CD4-positive, alpha-beta T cell (primary cell): ENCODE measurements at regions of chr12 and their contacts with region 1.

Region 1: DNA sequence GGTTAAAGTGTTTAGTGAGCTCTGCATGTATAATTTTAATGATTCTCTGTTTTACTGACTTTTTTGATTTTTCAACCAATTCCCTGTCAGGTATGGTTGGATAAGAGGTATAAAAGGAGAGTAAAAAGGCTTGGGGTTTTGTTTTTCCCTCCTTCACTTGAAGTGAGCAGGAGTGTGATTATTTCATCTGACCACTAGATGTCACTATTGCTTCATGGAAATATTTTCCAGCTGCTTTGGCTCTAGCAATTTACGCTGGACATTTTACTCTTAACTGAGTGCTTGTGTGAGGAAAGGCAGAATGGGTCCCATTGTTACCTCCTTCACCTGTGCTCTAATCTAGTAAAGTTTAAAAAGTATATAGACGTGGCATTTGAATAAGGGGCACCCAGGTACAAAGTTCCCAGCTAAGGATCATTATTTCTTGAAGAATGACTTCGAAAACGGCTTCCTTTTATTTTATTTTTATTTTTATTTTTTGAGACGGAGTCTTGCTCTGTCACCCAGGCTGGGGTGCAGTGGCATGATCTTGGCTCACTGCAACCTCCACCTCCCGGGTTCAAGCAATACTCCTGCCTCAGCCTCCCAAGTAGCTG is 66.5 kb downstream of the TBC1D30 start:
- DNase-seq: peak in 3 of 14 experiments; percentile 58 to 74 (median 68)
- ATAC-seq: peak; percentile 44
- H3K4me3 ChIP-seq: no peak overlapping the region
- H3K4me3 Mint-ChIP-seq: no peak overlapping the region
- H3K27ac ChIP-seq: no peak overlapping the region
- H3K27ac Mint-ChIP-seq: no peak overlapping the region
- H3K4me1 ChIP-seq: no peaks in the 10 kb centered on the region
- H3K4me1 Mint-ChIP-seq: no peaks in the 10 kb centered on the region
- H3K27me3 ChIP-seq: peaks cover 0 to 4% of the 10 kb centered on the region in 2 experiments
- H3K27me3 Mint-ChIP-seq: peaks cover 22% of the 10 kb centered on the region
- CTCF ChIP-seq: peak; percentile 90

Region 2: GRCh38 chr12:65269603-65270002 is 378.6 kb after region 1 on chr12:
- CTCF ChIA-PET with region 1: no interaction called
- POLR2A ChIA-PET with region 1: no interaction called
- intact Hi-C with region 1: no loop called
- DNase-seq: no peak
- ATAC-seq: no peak
- H3K4me3 ChIP-seq: no peak overlapping the region
- H3K4me3 Mint-ChIP-seq: no peak overlapping the region
- H3K27ac ChIP-seq: no peak overlapping the region
- H3K27ac Mint-ChIP-seq: no peak overlapping the region
- H3K4me1 ChIP-seq: no peaks in the 10 kb centered on the region
- H3K4me1 Mint-ChIP-seq: no peaks in the 10 kb centered on the region
- H3K27me3 ChIP-seq: peaks cover 0 to 14% of the 10 kb centered on the region in 2 experiments
- H3K27me3 Mint-ChIP-seq: peaks cover 34% of the 10 kb centered on the region
- CTCF ChIP-seq: no peak

Region 3: DNA sequence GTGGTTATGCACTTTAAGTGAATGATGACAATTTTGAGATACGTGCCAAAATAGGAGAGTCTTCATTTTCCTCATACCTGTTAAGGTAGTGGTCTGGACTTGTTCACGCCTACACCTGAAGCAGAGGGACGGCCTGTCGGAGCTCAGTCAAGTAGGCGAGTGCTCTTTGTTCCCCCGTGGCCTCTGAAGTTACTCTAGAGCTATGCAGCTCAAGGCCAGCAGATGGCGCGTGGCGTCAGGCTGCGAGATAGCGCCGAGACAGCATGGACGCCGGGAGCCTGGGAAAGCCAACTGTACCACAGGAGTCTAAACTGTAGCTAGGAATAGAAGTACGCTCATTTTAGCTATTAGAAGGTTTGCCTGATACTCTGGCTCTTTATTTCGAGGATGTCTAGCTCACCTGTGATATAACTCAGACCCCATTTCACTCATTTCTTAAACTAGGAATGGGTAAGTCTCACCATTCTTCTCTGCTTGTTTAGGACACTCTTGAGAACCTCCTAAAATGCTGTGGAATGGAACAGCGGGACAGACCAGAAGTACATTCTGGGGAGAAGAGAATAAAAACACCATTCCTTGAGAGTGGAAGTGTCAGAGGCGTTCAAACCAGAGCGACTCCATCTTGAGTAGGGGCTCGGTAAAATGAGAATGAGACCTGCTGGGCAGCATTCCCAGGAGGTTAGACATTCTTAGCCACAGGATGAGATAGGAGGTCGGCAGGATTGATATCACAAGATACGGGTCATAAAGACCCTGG is 665.9 kb after region 1 on chr12:
- CTCF ChIA-PET with region 1: no interaction called
- POLR2A ChIA-PET with region 1: no interaction called
- intact Hi-C with region 1: loop called in 1 of 2 experiments (anchors 5 kb)
- DNase-seq: peak; percentile 22 to 69 (median 40)
- ATAC-seq: peak; percentile 82
- H3K4me3 ChIP-seq: no peak overlapping the region
- H3K4me3 Mint-ChIP-seq: no peak overlapping the region
- H3K27ac ChIP-seq: no peak overlapping the region
- H3K27ac Mint-ChIP-seq: no peak overlapping the region
- H3K4me1 ChIP-seq: peaks cover 5% of the 10 kb centered on the region
- H3K4me1 Mint-ChIP-seq: no peaks in the 10 kb centered on the region
- H3K27me3 ChIP-seq: peaks cover 0 to 4% of the 10 kb centered on the region in 2 experiments
- H3K27me3 Mint-ChIP-seq: peaks cover 19% of the 10 kb centered on the region
- CTCF ChIP-seq: peak; percentile 70

Region 4: GRCh38 chr12:66087365-66087943 is 1196.5 kb after region 1 on chr12:
- CTCF ChIA-PET with region 1: no interaction called
- POLR2A ChIA-PET with region 1: no interaction called
- intact Hi-C with region 1: loop called (anchors 1 to 2 kb)
- DNase-seq: peak in 13 of 14 experiments; percentile 12 to 65 (median 34)
- ATAC-seq: peak; percentile 61
- H3K4me3 ChIP-seq: no peak overlapping the region
- H3K4me3 Mint-ChIP-seq: no peak overlapping the region
- H3K27ac ChIP-seq: no peak overlapping the region
- H3K27ac Mint-ChIP-seq: no peak overlapping the region
- H3K4me1 ChIP-seq: no peaks in the 10 kb centered on the region
- H3K4me1 Mint-ChIP-seq: no peaks in the 10 kb centered on the region
- H3K27me3 ChIP-seq: peaks cover 2 to 9% of the 10 kb centered on the region in 2 experiments
- H3K27me3 Mint-ChIP-seq: peaks cover 36% of the 10 kb centered on the region
- CTCF ChIP-seq: peak; percentile 71

Region 5: DNA sequence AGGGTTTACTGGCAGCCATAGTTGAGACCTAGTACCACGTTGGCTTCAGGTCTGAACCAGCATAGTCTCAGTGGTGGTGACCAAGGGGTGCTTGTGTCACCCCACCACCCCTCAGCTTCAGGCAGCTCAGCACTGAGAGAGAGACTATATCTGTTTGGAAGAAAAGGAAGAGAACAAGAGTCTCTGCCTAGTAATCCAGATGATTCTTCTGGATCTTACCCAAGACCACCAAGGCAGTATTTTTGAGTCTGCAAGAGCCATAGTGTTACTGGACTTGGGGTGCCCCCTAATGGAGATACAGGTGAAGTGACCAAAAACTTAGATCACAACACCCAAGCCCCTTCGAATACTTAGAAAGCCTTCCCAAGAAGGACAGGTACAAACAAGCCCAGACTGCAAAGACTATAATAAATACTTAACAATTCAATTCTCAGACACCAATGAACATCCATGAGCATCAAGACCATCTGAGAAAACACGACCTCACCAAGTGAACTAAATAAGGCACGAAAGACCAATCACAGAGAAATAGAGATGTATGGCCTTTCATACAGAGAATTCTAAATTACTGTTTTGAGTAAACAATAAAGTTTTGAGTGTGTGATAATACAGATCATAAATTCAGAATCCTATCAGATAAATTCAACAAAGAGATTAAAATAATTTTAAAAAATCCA is 1518.4 kb after region 1 on chr12:
- CTCF ChIA-PET with region 1: no interaction called
- POLR2A ChIA-PET with region 1: no interaction called
- intact Hi-C with region 1: loop called in 1 of 2 experiments (anchors 5 kb)
- DNase-seq: peak in 12 of 14 experiments; percentile 4 to 73 (median 26)
- ATAC-seq: no peak
- H3K4me3 ChIP-seq: no peak overlapping the region
- H3K4me3 Mint-ChIP-seq: no peak overlapping the region
- H3K27ac ChIP-seq: no peak overlapping the region
- H3K27ac Mint-ChIP-seq: no peak overlapping the region
- H3K4me1 ChIP-seq: no peaks in the 10 kb centered on the region
- H3K4me1 Mint-ChIP-seq: no peaks in the 10 kb centered on the region
- H3K27me3 ChIP-seq: no peaks in the 10 kb centered on the region
- H3K27me3 Mint-ChIP-seq: peaks cover 19% of the 10 kb centered on the region
- CTCF ChIP-seq: peak; percentile 93

Region 6: GRCh38 chr12:66860752-66861750 is 1970.1 kb after region 1 on chr12:
- CTCF ChIA-PET with region 1: no interaction called
- POLR2A ChIA-PET with region 1: no interaction called
- intact Hi-C with region 1: loop called in 1 of 2 experiments (anchors 5 kb)
- DNase-seq: peak; percentile 39 to 78 (median 58)
- ATAC-seq: peak; percentile 62
- H3K4me3 ChIP-seq: no peak overlapping the region
- H3K4me3 Mint-ChIP-seq: no peak overlapping the region
- H3K27ac ChIP-seq: no peak overlapping the region
- H3K27ac Mint-ChIP-seq: no peak overlapping the region
- H3K4me1 ChIP-seq: no peaks in the 10 kb centered on the region
- H3K4me1 Mint-ChIP-seq: peaks cover 23% of the 10 kb centered on the region
- H3K27me3 ChIP-seq: peaks cover 0 to 1% of the 10 kb centered on the region in 2 experiments
- H3K27me3 Mint-ChIP-seq: no peaks in the 10 kb centered on the region
- CTCF ChIP-seq: peak; percentile 95